Lower leg skin (tissue), 4 donors: ENCODE measurements at regions of chr9 and their contacts with region 1.

Region 1: GRCh38 chr9:35882263-35882848 is 12.2 kb upstream of the OR13J1 start:
- DNase-seq: peak; percentile 81 to 97
- H3K4me3 ChIP-seq: no peak overlapping the region
- CTCF ChIP-seq: peak in 1 of 3 donors; percentile 73
- POLR2A ChIP-seq: no peak

Region 2: GRCh38 chr9:35790385-35791296 is 91.7 kb before region 1 on chr9:
- intact Hi-C with region 1: loop called (anchors 5 kb)
- DNase-seq: peak; percentile 65 to 93
- H3K4me3 ChIP-seq: no peak overlapping the region
- CTCF ChIP-seq: peak in 1 of 3 donors; percentile 68
- POLR2A ChIP-seq: no peak